Right lobe of liver (tissue), 6 donors: ENCODE measurements at regions of chr19 and their contacts with region 1.

Region 1: GRCh38 chr19:50315773-50316448 is 13.3 kb downstream of the KCNC3 start:
- DNase-seq: no peak
- ATAC-seq: no peak
- H3K4me3 ChIP-seq: no peak overlapping the region
- H3K27ac ChIP-seq: no peak overlapping the region
- H3K4me1 ChIP-seq: no peaks in the 10 kb centered on the region
- H3K27me3 ChIP-seq: no peaks in the 10 kb centered on the region
- CTCF ChIP-seq: no peak
- POLR2A ChIP-seq: no peak

Region 2: GRCh38 chr19:49904136-49904535 is 411.8 kb before region 1 on chr19:
- intact Hi-C with region 1: loop called in 1 of 2 experiments (anchors 5 kb)
- DNase-seq: no peak
- ATAC-seq: peak in 2 of 4 donors; percentile 20 to 24
- H3K4me3 ChIP-seq: no peak overlapping the region
- H3K27ac ChIP-seq: no peak overlapping the region
- H3K4me1 ChIP-seq: no peaks in the 10 kb centered on the region
- H3K27me3 ChIP-seq: no peaks in the 10 kb centered on the region
- CTCF ChIP-seq: no peak
- POLR2A ChIP-seq: no peak